Cardiac septum (tissue), 1 donor: ENCODE measurements at regions of chr12 and their contacts with region 1.

Region 1: GRCh38 chr12:63826006-63826585 is 18.4 kb upstream of the SRGAP1 start:
- DNase-seq: no peak

Region 2: DNA sequence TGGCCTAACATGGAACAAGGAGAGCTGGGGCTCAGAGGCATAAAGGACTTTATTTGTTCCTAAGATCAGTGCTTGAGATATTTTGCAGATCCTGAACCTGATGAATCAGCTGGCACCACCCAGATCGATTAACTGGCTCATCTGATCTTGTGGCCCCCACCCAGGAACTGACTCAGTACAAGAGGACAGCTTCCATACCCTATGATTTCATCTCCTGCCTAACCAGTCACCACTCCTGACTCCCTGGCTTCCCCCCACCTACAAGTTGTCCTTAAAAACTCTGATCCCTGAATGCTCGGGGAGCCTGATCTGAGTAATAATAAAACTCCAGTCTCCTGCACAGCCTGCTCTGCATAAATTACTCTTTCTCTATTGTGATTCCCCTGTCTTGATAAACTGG is 559.4 kb after region 1 on chr12:
- intact Hi-C with region 1: loop called (anchors 5 kb)
- DNase-seq: no peak